CD8-positive, alpha-beta memory T cell (primary cell): ENCODE measurements at regions of chr19 and their contacts with region 1.

Region 1: GRCh38 chr19:52622261-52622660 is 15.9 kb downstream of the ZNF83 start:
- DNase-seq: no peak
- H3K4me3 ChIP-seq: no peak overlapping the region
- H3K4me3 Mint-ChIP-seq: peak overlapping the region in 1 of 7 donors; percentile 19
- H3K27ac ChIP-seq: no peak overlapping the region
- H3K27ac Mint-ChIP-seq: peak overlapping the region in 7 of 8 donors; percentile 17 to 86 (median 64)
- H3K4me1 ChIP-seq: no peaks in the 10 kb centered on the region
- H3K4me1 Mint-ChIP-seq: peaks cover 21 to 34% (median 27%) of the 10 kb centered on the region in 3 donors
- H3K27me3 ChIP-seq: no peaks in the 10 kb centered on the region
- H3K27me3 Mint-ChIP-seq: no peaks in the 10 kb centered on the region

Region 2: DNA sequence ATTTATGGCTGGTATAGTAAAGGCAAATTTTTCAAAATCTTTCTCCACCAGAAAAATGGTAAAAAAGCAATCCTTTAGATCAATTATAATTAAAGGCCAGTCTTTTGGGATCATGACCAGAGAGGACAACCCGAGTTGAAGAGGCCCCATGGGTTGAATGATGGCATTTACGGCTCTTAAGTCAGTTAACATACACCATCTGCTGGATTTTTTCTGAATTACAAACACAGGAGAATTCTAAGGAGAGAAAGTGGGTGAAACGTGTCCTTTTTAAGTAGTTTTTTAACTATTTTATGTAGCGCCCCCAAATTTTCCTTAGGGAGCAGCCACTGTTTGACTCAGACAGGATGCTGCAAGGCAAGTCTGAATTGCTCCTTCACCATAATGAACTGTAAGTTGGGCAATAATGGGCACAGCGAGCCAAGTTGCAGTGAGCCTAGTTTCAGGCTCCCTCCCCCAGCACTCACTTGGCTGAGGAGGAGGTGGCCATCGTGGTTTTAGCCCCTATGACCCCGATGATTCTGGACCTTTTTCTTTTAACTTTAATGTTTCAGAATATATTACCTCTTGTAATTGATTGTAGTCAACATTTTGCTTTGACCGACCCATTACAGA is 126.2 kb after region 1 on chr19:
- CTCF ChIA-PET with region 1: no interaction called
- POLR2A ChIA-PET with region 1: no interaction called
- DNase-seq: peak in 1 of 5 donors; percentile 38
- H3K4me3 ChIP-seq: no peak overlapping the region
- H3K4me3 Mint-ChIP-seq: no peak overlapping the region
- H3K27ac ChIP-seq: no peak overlapping the region
- H3K27ac Mint-ChIP-seq: peak overlapping the region in 2 of 8 donors; percentile 21 to 39
- H3K4me1 ChIP-seq: no peaks in the 10 kb centered on the region
- H3K4me1 Mint-ChIP-seq: peaks cover 0 to 19% (median 12%) of the 10 kb centered on the region in 3 donors
- H3K27me3 ChIP-seq: no peaks in the 10 kb centered on the region
- H3K27me3 Mint-ChIP-seq: no peaks in the 10 kb centered on the region

Region 3: GRCh38 chr19:53112286-53112685 is 490.0 kb after region 1 on chr19:
- CTCF ChIA-PET with region 1: no interaction called
- POLR2A ChIA-PET with region 1: interaction called, 12 read pairs
- DNase-seq: no peak
- H3K4me3 ChIP-seq: no peak overlapping the region
- H3K4me3 Mint-ChIP-seq: no peak overlapping the region
- H3K27ac ChIP-seq: no peak overlapping the region
- H3K27ac Mint-ChIP-seq: no peak overlapping the region
- H3K4me1 ChIP-seq: no peaks in the 10 kb centered on the region
- H3K4me1 Mint-ChIP-seq: no peaks in the 10 kb centered on the region
- H3K27me3 ChIP-seq: no peaks in the 10 kb centered on the region
- H3K27me3 Mint-ChIP-seq: peaks cover 5 to 30% of the 10 kb centered on the region in 2 donors